Activated CD4-positive, alpha-beta T cell treated with anti-CD3 and anti-CD28 coated beads, Interleukin-2, amount 10 ng/mL, durations not matched to agents 24 days and 14 days (primary cell): ENCODE measurements at regions of chrX and their contacts with region 1.

Region 1: GRCh38 chrX:120753413-120754251 is 122.0 kb downstream of the CT47B1 start:
- DNase-seq: no peak
- H3K4me3 Mint-ChIP-seq: peak overlapping the region; percentile 47
- H3K27ac Mint-ChIP-seq: peak overlapping the region; percentile 71
- H3K4me1 Mint-ChIP-seq: peaks cover 33% of the 10 kb centered on the region
- H3K27me3 Mint-ChIP-seq: no peaks in the 10 kb centered on the region

Region 2: GRCh38 chrX:120736989-120737388 is 16.6 kb before region 1 on chrX:
- intact Hi-C with region 1: loop called (anchors 2 kb)
- DNase-seq: no peak
- H3K4me3 Mint-ChIP-seq: no peak overlapping the region
- H3K27ac Mint-ChIP-seq: peak overlapping the region; percentile 50
- H3K4me1 Mint-ChIP-seq: peaks cover 20% of the 10 kb centered on the region
- H3K27me3 Mint-ChIP-seq: no peaks in the 10 kb centered on the region